ENCODE measurements at regions of chr2 and their contacts with region 1.

Region 1: GRCh38 chr2:174634130-174635014 is 36.8 kb upstream of the WIPF1 start:
- DNase-seq: peak; percentile 39 to 79
- ATAC-seq: peak; percentile 71 to 85 (median 72)
- H3K4me3 ChIP-seq: peak overlapping the region; percentile 65
- H3K4me3 Mint-ChIP-seq: peak overlapping the region; percentile 98
- H3K27ac ChIP-seq: peak overlapping the region; percentile 83
- H3K27ac Mint-ChIP-seq: peak overlapping the region; percentile 95 to 98
- H3K4me1 ChIP-seq: peaks cover 30% of the 10 kb centered on the region
- H3K4me1 Mint-ChIP-seq: peaks cover 62 to 63% of the 10 kb centered on the region in 2 donors
- H3K27me3 ChIP-seq: no peaks in the 10 kb centered on the region
- H3K27me3 Mint-ChIP-seq: no peaks in the 10 kb centered on the region
- CTCF ChIP-seq: no peak

Region 2: GRCh38 chr2:174603280-174603679 is 31.1 kb before region 1 on chr2:
- intact Hi-C with region 1: no loop called
- DNase-seq: peak; percentile 39 to 84
- ATAC-seq: peak; percentile 87 to 94 (median 93)
- H3K4me3 ChIP-seq: no peak overlapping the region
- H3K4me3 Mint-ChIP-seq: no peak overlapping the region
- H3K27ac ChIP-seq: peak overlapping the region; percentile 44
- H3K27ac Mint-ChIP-seq: peak overlapping the region; percentile 81 to 83
- H3K4me1 ChIP-seq: peaks cover 45% of the 10 kb centered on the region
- H3K4me1 Mint-ChIP-seq: peaks cover 64 to 69% of the 10 kb centered on the region in 2 donors
- H3K27me3 ChIP-seq: no peaks in the 10 kb centered on the region
- H3K27me3 Mint-ChIP-seq: no peaks in the 10 kb centered on the region
- CTCF ChIP-seq: peak; percentile 60

Region 3: DNA sequence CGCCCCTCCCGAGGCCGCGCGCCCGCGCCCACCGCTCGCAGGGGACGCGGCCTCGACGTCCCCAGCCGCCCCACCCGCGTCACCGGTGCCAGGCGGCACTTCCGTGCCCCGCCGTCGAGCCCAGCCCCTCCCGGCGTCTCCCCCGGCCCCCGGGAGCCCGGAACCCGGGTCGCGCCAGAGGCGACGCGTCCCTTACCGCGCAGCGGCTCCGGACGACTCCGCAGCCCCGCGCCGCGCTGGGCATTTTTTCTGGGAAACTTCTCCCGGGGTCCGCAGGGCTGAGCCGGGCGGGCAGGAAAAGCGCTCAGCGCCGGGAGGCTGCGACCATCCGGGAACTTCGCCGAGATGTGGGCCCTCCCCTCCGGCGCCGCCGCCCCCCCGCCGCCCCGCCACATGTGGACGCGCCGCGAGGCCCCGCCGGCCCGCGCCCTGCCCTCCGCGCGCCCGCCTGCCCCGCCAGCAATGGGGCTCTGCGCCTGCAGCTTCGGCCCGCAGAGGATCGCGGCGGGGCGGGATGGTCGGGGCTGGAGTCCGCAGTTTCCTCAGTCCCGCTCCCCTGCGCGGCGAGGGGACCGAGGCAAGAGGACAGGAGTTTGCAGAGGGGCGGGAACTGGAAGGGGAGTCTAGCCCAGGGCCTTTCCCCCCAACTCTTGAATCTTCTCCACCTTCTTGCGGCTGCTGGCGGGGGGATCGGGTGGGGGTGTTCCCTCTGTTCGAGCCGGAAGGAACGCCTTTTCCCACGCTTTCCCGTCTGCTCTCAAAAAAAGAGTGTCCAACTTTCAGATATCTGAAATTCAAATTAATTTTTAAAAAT is 48.4 kb after region 1 on chr2:
- intact Hi-C with region 1: loop called (anchors 2 kb)
- DNase-seq: peak; percentile 63 to 78
- ATAC-seq: peak; percentile 78 to 84 (median 80)
- H3K4me3 ChIP-seq: peak overlapping the region; percentile 75
- H3K4me3 Mint-ChIP-seq: peak overlapping the region; percentile 95
- H3K27ac ChIP-seq: peak overlapping the region; percentile 40
- H3K27ac Mint-ChIP-seq: peak overlapping the region; percentile 88
- H3K4me1 ChIP-seq: peaks cover 17% of the 10 kb centered on the region
- H3K4me1 Mint-ChIP-seq: peaks cover 25 to 40% of the 10 kb centered on the region in 2 donors
- H3K27me3 ChIP-seq: no peaks in the 10 kb centered on the region
- H3K27me3 Mint-ChIP-seq: no peaks in the 10 kb centered on the region
- CTCF ChIP-seq: no peak

Region 4: DNA sequence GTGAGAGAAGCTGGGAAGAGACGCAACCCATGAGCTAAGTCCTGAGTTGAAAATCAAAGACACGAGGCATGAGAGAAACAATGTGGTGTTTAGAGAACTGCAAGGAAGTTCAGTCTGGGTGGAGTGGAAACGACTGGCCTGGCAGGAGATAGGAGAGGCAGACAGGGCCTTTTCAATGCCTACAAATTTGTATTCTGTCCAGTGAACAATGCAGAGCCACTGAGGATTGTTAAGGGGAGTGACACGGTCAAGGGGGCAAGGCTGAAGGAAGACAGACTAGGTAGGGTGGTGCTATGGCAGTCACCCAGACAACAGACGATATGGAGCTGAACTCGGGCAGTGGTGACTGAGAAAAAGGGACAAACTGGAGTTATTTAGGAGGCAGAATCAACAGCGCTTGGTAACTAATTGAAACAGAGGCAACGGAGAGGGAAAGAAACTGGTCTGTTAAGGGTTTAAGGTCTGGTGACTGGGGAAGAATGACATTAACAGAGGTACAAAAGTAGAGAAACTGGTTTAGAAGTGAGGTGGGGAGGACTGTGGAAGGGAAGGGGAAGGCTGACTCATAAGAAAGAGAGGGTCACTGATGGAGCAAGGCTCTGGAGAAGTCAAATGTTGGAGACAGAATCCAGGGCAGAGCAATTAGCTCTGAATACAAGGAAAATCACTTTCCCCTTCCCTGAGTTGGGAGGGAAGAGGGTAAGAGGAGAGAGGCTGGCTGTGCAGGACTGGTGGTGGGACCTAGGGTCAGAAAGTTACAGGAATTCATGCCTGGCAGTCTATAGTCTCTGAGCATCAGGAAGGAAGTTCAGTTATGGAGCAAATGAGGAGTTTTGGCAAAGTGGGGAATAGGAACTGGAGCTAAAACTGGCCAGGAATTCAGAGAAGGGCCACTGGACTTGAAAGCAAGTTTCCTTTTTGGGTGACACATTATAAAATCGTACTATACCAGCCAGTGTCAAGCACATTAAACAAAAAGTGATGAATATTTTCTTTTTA is 193.3 kb after region 1 on chr2:
- intact Hi-C with region 1: no loop called
- DNase-seq: no peak
- ATAC-seq: no peak
- H3K4me3 ChIP-seq: no peak overlapping the region
- H3K4me3 Mint-ChIP-seq: no peak overlapping the region
- H3K27ac ChIP-seq: no peak overlapping the region
- H3K27ac Mint-ChIP-seq: no peak overlapping the region
- H3K4me1 ChIP-seq: no peaks in the 10 kb centered on the region
- H3K4me1 Mint-ChIP-seq: no peaks in the 10 kb centered on the region
- H3K27me3 ChIP-seq: no peaks in the 10 kb centered on the region
- H3K27me3 Mint-ChIP-seq: peaks cover 0 to 3% of the 10 kb centered on the region in 2 donors
- CTCF ChIP-seq: no peak